B cell (primary cell): ENCODE measurements at regions of chr6 and their contacts with region 1.

Region 1: DNA sequence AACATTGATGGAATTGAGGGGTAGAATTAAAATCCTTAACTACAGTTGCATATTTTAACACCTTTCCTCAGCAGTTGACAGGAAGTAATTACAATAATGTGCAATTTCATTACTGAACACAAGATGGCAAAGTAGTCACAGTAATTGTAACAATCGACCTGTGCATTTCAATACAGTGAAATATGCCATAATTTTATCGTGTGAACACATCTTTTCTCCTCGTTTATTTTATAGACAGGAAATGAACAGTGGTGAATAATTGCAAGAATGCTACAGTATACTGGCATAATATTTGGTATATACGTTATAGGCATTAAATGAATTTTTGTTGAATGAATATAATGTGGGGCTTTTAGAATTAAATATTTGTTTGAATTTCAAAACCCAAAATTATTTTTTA is 25.0 kb downstream of the CYB5R4 start:
- DNase-seq: peak; percentile 62
- ATAC-seq: peak; percentile 51
- H3K4me3 ChIP-seq: no peak overlapping the region
- H3K4me3 Mint-ChIP-seq: no peak overlapping the region
- H3K27ac ChIP-seq: no peak overlapping the region
- H3K27ac Mint-ChIP-seq: no peak overlapping the region
- H3K4me1 ChIP-seq: peaks cover 5% of the 10 kb centered on the region in 2 donors
- H3K4me1 Mint-ChIP-seq: peaks cover 43% of the 10 kb centered on the region
- H3K27me3 ChIP-seq: no peaks in the 10 kb centered on the region
- H3K27me3 Mint-ChIP-seq: no peaks in the 10 kb centered on the region
- CTCF ChIP-seq: peak; percentile 86

Region 2: GRCh38 chr6:83859410-83860358 is 24.8 kb before region 1 on chr6 and contains the start of gene CYB5R4:
- CTCF ChIA-PET with region 1: interaction called, 3 read pairs
- POLR2A ChIA-PET with region 1: no interaction called
- intact Hi-C with region 1: loop called (anchors 2 kb)
- DNase-seq: peak; percentile 95
- ATAC-seq: peak; percentile 97
- H3K4me3 ChIP-seq: peak within 1 kb of the TSS; percentile 85 to 98 (median 94)
- H3K4me3 Mint-ChIP-seq: peak within 1 kb of the TSS; percentile 99
- H3K27ac ChIP-seq: peak within 1 kb of the TSS; percentile 83 to 87
- H3K27ac Mint-ChIP-seq: peak within 1 kb of the TSS; percentile 95
- H3K4me1 ChIP-seq: peaks cover 25% of the 10 kb centered on the region in 2 donors
- H3K4me1 Mint-ChIP-seq: peaks cover 46% of the 10 kb centered on the region
- H3K27me3 ChIP-seq: peaks cover 0 to 10% (median 7%) of the 10 kb centered on the region in 4 experiments
- H3K27me3 Mint-ChIP-seq: peaks cover 16% of the 10 kb centered on the region
- CTCF ChIP-seq: peak; percentile 47
- total RNA-seq, gene CYB5R4: 39.6 and 43.7 TPM in 2 replicates

Region 3: DNA sequence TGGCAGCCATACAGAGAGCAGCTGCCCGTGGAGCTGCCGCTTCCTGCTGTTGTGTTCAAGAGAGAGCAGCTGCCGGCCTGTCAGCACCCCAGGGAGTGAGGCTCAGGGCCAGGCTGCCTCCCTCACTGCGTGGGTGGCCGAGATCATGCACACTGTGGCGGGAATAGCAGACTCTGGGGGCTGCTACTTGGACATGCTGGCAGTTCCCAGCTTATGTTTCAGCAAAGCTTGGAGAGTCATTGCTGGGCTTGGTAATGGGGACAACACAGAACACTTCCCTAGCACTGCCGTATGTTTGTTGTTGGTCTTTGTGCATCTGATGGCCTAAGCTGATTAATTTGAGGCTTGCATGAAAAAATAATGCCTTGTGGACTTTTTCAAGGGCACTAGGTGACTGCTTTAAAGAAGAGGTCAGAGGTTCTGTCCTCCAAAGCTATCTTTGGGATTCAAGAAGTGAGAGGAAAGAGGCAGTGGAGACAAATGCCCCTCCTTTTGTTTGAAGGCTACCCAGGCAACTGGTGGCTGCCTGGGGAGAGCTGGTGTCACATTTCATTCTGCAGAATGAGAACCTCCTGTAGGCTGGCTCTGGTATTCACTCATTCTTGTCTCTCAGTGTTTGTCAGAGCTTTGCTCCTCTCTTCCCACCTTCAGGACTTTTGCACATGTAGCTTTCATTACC is 167.8 kb after region 1 on chr6:
- CTCF ChIA-PET with region 1: no interaction called
- POLR2A ChIA-PET with region 1: no interaction called
- intact Hi-C with region 1: loop called (anchors 10 kb)
- DNase-seq: no peak
- ATAC-seq: no peak
- H3K4me3 ChIP-seq: no peak overlapping the region
- H3K4me3 Mint-ChIP-seq: no peak overlapping the region
- H3K27ac ChIP-seq: no peak overlapping the region
- H3K27ac Mint-ChIP-seq: no peak overlapping the region
- H3K4me1 ChIP-seq: no peaks in the 10 kb centered on the region
- H3K4me1 Mint-ChIP-seq: no peaks in the 10 kb centered on the region
- H3K27me3 ChIP-seq: no peaks in the 10 kb centered on the region
- H3K27me3 Mint-ChIP-seq: peaks cover 8% of the 10 kb centered on the region
- CTCF ChIP-seq: no peak